ENCODE measurements at regions of chr9 and their contacts with region 1.

Region 1: DNA sequence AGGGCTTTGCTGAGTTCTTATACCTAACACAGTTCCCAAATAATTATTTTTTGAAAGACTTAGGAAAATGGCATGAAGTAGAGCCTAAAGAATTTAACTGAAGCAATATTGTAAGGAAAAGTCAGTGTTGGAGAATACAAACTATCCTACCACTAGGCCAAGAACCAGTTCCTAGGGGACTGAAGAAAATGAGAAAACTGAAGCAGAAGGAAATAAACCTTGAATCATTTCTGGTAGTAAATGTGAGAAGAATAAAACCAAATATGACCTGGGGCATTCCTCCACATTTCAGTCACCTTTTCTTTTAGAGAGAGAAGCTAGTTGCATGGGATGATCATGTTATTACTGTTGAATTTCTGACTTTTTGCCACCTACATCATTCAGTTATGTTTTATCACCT is 1393.9 kb upstream of the C9orf72 start:
- DNase-seq: no peak
- H3K4me3 ChIP-seq: no peak overlapping the region
- H3K4me3 Mint-ChIP-seq: no peak overlapping the region
- H3K27ac ChIP-seq: no peak overlapping the region
- H3K27ac Mint-ChIP-seq: no peak overlapping the region
- H3K4me1 ChIP-seq: no peaks in the 10 kb centered on the region
- H3K4me1 Mint-ChIP-seq: no peaks in the 10 kb centered on the region
- H3K27me3 ChIP-seq: no peaks in the 10 kb centered on the region
- H3K27me3 Mint-ChIP-seq: no peaks in the 10 kb centered on the region

Region 2: GRCh38 chr9:28927711-28928110 is 39.5 kb before region 1 on chr9:
- CTCF ChIA-PET with region 1: no interaction called
- POLR2A ChIA-PET with region 1: no interaction called
- DNase-seq: no peak
- H3K4me3 ChIP-seq: no peak overlapping the region
- H3K4me3 Mint-ChIP-seq: no peak overlapping the region
- H3K27ac ChIP-seq: no peak overlapping the region
- H3K27ac Mint-ChIP-seq: no peak overlapping the region
- H3K4me1 ChIP-seq: no peaks in the 10 kb centered on the region
- H3K4me1 Mint-ChIP-seq: no peaks in the 10 kb centered on the region
- H3K27me3 ChIP-seq: no peaks in the 10 kb centered on the region
- H3K27me3 Mint-ChIP-seq: no peaks in the 10 kb centered on the region

Region 3: GRCh38 chr9:29021632-29022031 is 54.4 kb after region 1 on chr9:
- CTCF ChIA-PET with region 1: no interaction called
- POLR2A ChIA-PET with region 1: interaction called, 10 read pairs
- DNase-seq: no peak
- H3K4me3 ChIP-seq: no peak overlapping the region
- H3K4me3 Mint-ChIP-seq: no peak overlapping the region
- H3K27ac ChIP-seq: no peak overlapping the region
- H3K27ac Mint-ChIP-seq: no peak overlapping the region
- H3K4me1 ChIP-seq: no peaks in the 10 kb centered on the region
- H3K4me1 Mint-ChIP-seq: no peaks in the 10 kb centered on the region
- H3K27me3 ChIP-seq: no peaks in the 10 kb centered on the region
- H3K27me3 Mint-ChIP-seq: peaks cover 0 to 3% of the 10 kb centered on the region in 2 donors